Activated CD4-positive, alpha-beta memory T cell treated with anti-CD3 and anti-CD28 coated beads for 36 hours (primary cell): ENCODE measurements at regions of chr19 and their contacts with region 1.

Region 1: DNA sequence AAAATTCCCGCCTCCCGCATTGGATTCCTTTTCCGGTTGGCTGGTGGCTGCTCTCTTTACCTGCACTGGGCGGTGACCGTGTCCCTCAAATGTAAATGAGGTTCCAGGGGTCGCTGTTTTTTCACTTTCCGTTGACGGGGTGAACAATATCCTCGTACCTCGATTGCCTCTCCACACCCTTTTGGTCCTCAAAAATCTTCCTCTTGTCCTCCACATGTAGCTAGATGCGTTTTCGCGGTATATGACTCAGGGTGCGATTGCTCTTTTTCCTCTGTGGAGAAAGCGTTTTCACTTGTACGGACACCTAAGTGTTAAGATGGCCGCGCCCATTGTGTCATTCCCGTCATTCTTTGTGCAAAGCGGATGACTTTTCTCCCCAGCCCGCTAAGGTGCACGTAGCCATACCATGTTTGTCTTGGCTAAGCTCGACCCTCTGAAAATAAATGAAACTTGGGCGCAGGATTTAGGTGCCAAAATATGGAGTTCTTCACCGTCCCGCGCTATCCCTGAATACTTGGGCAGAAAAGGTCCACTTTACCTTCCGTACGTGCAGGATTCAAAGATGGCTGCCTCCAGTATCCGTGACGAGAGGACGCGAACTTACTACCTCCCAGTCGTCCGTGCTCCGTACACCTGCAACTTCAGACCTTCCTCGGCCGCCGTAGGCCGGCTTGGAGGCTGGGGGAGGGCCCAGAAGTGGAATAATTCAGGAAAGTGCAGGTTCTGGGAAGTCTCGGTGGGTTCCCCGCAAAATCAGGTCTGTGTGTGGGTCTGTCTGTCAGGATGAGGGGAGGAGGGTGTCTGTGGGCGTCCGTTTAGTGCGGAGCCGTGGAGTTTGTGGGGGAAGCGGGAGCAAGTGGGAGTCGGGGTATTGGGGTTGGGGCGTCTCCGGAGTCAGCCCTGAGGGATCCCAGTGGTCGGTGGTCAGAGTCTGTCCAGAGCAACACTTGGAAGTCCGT is at the start of gene ZNF613:
- DNase-seq: peak; percentile 90
- H3K4me3 Mint-ChIP-seq: peak within 1 kb of the TSS; percentile 92
- H3K27ac Mint-ChIP-seq: peak within 1 kb of the TSS; percentile 97
- H3K4me1 Mint-ChIP-seq: peaks cover 20% of the 10 kb centered on the region
- H3K27me3 Mint-ChIP-seq: no peaks in the 10 kb centered on the region
- total RNA-seq, gene ZNF613: 3.2 to 4.6 TPM

Region 2: DNA sequence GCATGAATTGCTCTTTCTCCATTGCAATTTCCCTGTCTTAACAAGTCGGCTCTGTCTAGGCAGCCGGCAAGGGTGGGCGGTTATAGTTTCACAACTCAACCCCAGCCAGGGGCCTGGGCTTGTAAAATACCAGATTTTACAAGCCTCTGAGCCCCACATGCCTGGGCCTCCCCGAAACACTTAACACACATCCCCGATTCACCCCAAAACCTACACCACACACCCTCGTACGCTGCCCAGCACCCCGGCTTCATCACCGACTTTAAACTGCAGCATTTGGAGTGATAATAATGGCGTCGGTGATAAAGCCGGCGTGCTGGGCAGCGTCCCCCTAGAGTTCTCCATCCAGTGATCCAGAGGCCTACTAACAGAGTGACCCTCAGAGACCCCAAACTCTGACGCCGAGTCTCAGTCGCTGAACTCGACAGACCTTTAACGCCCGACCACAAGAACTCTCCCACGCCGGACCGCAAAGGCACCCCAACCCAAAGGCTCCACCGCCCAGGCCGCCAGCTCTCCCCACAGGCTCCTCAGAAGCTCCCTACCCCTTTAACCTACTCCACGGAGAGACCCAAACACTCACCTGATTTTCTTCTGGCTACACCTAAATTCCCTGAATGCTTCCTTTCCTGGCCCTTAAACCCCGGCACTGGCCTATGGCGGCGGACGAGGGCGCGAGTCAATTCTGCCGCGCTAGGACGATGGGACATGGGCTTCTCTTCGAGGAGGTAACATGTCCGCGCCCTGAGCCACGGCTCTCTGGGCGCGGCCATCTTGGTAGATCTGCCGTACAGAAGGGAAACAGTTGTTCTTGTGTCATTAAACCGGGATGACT is 22.5 kb before region 1 on chr19 and contains the start of gene ZNF649:
- CTCF ChIA-PET with region 1: no interaction called
- POLR2A ChIA-PET with region 1: no interaction called
- intact Hi-C with region 1: loop called (anchors 1 kb)
- DNase-seq: peak; percentile 88
- H3K4me3 Mint-ChIP-seq: peak within 1 kb of the TSS; percentile 99
- H3K27ac Mint-ChIP-seq: peak within 1 kb of the TSS; percentile 97
- H3K4me1 Mint-ChIP-seq: peaks cover 22% of the 10 kb centered on the region
- H3K27me3 Mint-ChIP-seq: peaks cover 16% of the 10 kb centered on the region
- total RNA-seq, gene ZNF649: 6.7 to 9.0 TPM

Region 3: DNA sequence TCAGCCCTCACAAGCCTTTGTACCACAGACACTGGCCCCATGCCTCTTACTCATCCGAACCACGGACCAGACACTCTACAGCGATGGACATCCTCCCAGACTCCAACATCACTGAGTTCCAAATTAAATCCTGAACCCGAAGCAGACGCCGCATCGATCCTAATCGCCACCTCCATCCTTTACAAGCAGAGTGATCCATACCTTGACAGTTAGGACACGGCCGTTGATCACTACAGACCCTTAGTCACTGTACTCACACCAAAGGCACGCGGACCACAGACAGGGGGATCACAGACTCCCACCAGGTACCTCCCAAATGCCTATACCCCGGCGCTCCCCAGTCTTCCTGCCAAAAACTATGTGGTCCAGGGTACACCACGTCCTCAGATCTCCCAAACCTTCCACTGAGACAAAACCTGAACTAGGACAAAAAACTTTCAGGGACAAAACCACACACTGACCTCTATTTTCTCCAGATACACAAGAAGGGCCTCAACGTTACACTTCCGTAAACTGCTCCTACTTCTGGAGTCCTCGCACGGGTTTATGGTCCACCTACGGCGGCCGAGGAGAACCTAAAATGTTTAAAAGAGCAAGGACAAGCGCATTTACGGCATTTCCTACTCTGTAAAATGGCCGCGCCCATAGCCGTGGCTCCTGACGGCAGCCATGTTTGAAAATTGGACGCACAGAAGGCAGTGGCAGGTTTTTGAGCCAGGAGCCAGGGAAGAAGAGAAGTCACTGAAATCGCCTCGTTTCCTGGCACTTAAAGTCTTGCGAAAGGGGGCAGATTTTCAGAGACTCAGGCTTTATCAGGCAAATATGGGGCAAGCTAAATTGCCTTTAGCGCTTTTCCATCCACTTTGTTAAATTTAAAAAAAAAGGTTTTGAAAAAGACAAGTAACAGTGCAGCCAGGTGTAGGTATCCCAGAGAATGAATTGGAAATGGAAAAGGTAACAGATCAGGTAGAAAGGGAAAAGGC is 59.5 kb after region 1 on chr19 and contains the start of gene ZNF350:
- CTCF ChIA-PET with region 1: no interaction called
- POLR2A ChIA-PET with region 1: no interaction called
- intact Hi-C with region 1: loop called (anchors 1 kb)
- DNase-seq: peak; percentile 94
- H3K4me3 Mint-ChIP-seq: peak within 1 kb of the TSS; percentile 89
- H3K27ac Mint-ChIP-seq: peak within 1 kb of the TSS; percentile 87
- H3K4me1 Mint-ChIP-seq: peaks cover 12% of the 10 kb centered on the region
- H3K27me3 Mint-ChIP-seq: no peaks in the 10 kb centered on the region
- total RNA-seq, gene ZNF350: 6.9 to 8.1 TPM